B cell (primary cell): ENCODE measurements at regions of chr6 and their contacts with region 1.

Region 1: GRCh38 chr6:10886691-10887535 is at the start of gene SYCP2L:
- DNase-seq: peak; percentile 76
- ATAC-seq: no peak
- H3K4me3 ChIP-seq: peak within 1 kb of the TSS in 4 of 5 experiments; percentile 25 to 53 (median 38)
- H3K4me3 Mint-ChIP-seq: peak within 1 kb of the TSS; percentile 79
- H3K27ac ChIP-seq: no peak within 1 kb of the TSS
- H3K27ac Mint-ChIP-seq: peak within 1 kb of the TSS; percentile 16
- H3K4me1 ChIP-seq: peaks cover 44 to 46% of the 10 kb centered on the region in 2 donors
- H3K4me1 Mint-ChIP-seq: peaks cover 35% of the 10 kb centered on the region
- H3K27me3 ChIP-seq: peaks cover 0 to 58% (median 53%) of the 10 kb centered on the region in 4 experiments
- H3K27me3 Mint-ChIP-seq: peaks cover 53% of the 10 kb centered on the region
- CTCF ChIP-seq: peak; percentile 26
- total RNA-seq, gene SYCP2L: not detected in 2 replicates

Region 2: DNA sequence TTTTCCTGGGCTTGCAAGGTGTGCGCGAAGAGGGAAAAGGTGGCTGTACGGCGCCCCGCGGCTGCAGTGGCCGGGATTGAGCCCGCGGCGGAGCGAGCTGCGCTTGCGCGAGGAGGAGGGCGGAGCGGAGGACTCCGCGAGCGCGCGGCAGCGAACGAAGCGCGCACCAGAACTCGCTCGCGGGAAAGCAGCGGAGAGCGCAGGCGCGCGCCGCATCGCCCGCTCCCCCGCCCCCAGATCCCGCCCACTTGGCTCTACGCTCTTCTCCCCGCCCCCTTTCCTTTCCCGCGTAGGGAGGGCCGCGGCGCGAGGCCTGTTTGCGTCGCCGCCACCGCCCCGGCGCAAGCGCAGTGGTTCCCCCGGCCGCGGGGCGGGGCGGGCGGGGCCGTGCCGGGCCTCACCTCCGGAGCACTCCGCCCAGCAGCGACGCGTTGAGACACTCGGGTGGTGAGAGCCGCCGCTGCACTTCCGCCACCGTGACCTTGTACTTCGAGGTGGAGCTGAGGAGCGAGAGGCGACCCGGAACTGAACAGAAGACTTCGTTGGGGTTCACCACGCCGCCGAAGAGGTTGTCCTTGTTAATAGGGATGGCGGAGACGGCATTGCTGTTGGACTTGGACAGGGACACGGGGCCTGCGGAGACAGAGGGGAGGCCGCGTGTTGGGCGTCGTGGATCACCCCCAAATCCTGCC is 482.7 kb before region 1 on chr6:
- CTCF ChIA-PET with region 1: no interaction called
- POLR2A ChIA-PET with region 1: no interaction called
- intact Hi-C with region 1: loop called (anchors 5 kb)
- DNase-seq: peak; percentile 91
- ATAC-seq: peak; percentile 87
- H3K4me3 ChIP-seq: peak overlapping the region; percentile 43 to 66 (median 59)
- H3K4me3 Mint-ChIP-seq: peak overlapping the region; percentile 81
- H3K27ac ChIP-seq: peak overlapping the region; percentile 32 to 37
- H3K27ac Mint-ChIP-seq: peak overlapping the region; percentile 56
- H3K4me1 ChIP-seq: peaks cover 14 to 15% of the 10 kb centered on the region in 2 donors
- H3K4me1 Mint-ChIP-seq: peaks cover 13% of the 10 kb centered on the region
- H3K27me3 ChIP-seq: peaks cover 0 to 64% (median 62%) of the 10 kb centered on the region in 4 experiments
- H3K27me3 Mint-ChIP-seq: peaks cover 77% of the 10 kb centered on the region
- CTCF ChIP-seq: no peak

Region 3: DNA sequence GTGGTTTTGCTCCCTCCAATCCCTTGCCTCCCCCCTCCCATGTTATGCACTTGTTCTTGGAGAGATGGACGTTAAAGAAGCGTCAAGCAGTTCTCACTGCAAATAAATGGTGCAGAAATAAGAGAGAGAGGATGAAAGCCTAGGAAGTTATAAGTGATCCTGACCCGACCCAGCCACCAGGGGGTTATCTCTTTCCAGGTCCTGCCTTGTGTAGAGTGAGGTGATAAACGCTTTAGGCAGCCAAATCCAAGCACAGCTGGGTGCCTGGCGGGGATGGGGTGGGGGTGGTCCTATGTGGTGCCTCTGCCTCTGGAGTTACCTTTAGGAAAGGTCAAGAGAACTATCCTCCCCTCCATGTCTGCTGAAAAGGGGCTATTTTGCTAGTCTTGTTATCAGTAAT is 462.9 kb before region 1 on chr6:
- CTCF ChIA-PET with region 1: no interaction called
- POLR2A ChIA-PET with region 1: no interaction called
- intact Hi-C with region 1: loop called (anchors 5 kb)
- DNase-seq: no peak
- ATAC-seq: no peak
- H3K4me3 ChIP-seq: no peak overlapping the region
- H3K4me3 Mint-ChIP-seq: no peak overlapping the region
- H3K27ac ChIP-seq: no peak overlapping the region
- H3K27ac Mint-ChIP-seq: peak overlapping the region; percentile 26
- H3K4me1 ChIP-seq: peaks cover 22 to 53% of the 10 kb centered on the region in 2 donors
- H3K4me1 Mint-ChIP-seq: peaks cover 27% of the 10 kb centered on the region
- H3K27me3 ChIP-seq: peaks cover 2 to 88% (median 81%) of the 10 kb centered on the region in 4 experiments
- H3K27me3 Mint-ChIP-seq: peaks cover 73% of the 10 kb centered on the region
- CTCF ChIP-seq: no peak

Region 4: DNA sequence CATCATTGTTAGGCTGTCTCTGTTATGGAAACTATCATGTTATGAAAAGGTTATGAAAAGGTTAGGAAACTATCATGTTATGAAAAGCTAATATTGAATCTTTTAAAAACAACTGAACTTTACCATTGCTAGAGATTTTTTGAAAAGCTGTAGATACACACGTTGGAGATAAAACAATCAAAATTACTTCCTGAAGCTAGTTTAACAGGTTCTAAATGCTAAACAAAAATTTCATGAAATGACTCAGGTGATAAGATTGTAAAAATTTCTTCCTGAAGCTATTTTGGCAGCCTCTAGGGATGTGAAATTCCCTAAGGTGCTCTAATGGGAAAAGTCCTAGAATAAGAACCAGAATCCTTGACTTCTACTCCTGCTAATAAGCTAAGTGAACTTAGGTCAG is 13.6 kb before region 1 on chr6:
- CTCF ChIA-PET with region 1: no interaction called
- POLR2A ChIA-PET with region 1: no interaction called
- intact Hi-C with region 1: no loop called
- DNase-seq: no peak
- ATAC-seq: no peak
- H3K4me3 ChIP-seq: no peak overlapping the region
- H3K4me3 Mint-ChIP-seq: no peak overlapping the region
- H3K27ac ChIP-seq: no peak overlapping the region
- H3K27ac Mint-ChIP-seq: no peak overlapping the region
- H3K4me1 ChIP-seq: no peaks in the 10 kb centered on the region
- H3K4me1 Mint-ChIP-seq: no peaks in the 10 kb centered on the region
- H3K27me3 ChIP-seq: peaks cover 0 to 8% (median 0%) of the 10 kb centered on the region in 4 experiments
- H3K27me3 Mint-ChIP-seq: peaks cover 36% of the 10 kb centered on the region
- CTCF ChIP-seq: no peak

Region 5: GRCh38 chr6:10901770-10902169 is 14.9 kb after region 1 on chr6:
- CTCF ChIA-PET with region 1: interaction called, 3 read pairs
- POLR2A ChIA-PET with region 1: no interaction called
- intact Hi-C with region 1: loop called (anchors 1 kb)
- DNase-seq: peak; percentile 80
- ATAC-seq: peak; percentile 97
- H3K4me3 ChIP-seq: peak overlapping the region in 4 of 5 experiments; percentile 1 to 52 (median 38)
- H3K4me3 Mint-ChIP-seq: peak overlapping the region; percentile 86
- H3K27ac ChIP-seq: peak overlapping the region; percentile 31 to 70
- H3K27ac Mint-ChIP-seq: peak overlapping the region; percentile 93
- H3K4me1 ChIP-seq: peaks cover 14% of the 10 kb centered on the region in 2 donors
- H3K4me1 Mint-ChIP-seq: peaks cover 17% of the 10 kb centered on the region
- H3K27me3 ChIP-seq: no peaks in the 10 kb centered on the region
- H3K27me3 Mint-ChIP-seq: no peaks in the 10 kb centered on the region
- CTCF ChIP-seq: no peak

Region 6: DNA sequence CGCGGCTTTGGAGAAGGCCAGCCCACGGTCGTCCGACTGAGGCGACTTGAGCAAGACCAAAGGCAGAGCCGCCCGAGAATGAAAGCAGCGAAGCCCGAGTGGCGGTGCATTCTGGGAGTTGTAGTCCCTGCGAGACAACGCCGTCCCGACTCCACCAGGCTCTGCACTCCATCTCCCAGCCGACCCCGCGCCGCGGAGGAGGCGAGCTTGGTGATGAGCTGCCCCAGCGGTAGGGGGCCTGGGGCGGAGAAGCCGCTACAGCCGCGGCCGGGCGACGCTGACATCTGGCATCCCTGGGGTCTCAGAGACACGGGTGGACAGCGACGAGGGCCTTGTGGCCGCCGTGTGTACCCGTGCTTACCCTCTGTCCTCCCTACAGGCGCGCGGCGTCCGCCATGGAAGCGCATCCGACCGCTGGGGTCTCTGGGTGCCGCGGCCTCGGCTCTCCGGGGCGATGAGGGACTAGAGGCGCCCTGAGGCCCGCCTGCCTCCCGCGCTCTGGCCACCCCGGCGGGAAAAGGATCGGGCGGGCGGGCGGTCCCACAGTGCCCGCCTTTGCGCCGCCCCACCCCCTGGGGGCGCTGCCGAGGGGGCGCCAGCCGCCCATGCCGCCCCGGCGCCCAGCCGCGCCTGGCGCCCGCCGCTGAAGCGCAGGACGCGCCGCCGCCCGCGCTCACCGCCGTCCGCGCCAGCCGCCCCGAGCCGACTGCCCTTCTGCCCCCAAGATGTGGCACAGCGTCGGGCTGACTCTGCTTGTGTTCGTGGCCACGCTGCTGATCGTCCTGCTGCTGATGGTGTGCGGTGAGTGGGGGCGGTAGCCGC is 206.9 kb after region 1 on chr6 and contains the start of gene SMIM13:
- CTCF ChIA-PET with region 1: no interaction called
- POLR2A ChIA-PET with region 1: no interaction called
- intact Hi-C with region 1: loop called (anchors 5 kb)
- DNase-seq: peak; percentile 96
- ATAC-seq: peak; percentile 90
- H3K4me3 ChIP-seq: peak within 1 kb of the TSS; percentile 65 to 95 (median 89)
- H3K4me3 Mint-ChIP-seq: peak within 1 kb of the TSS; percentile 97
- H3K27ac ChIP-seq: peak within 1 kb of the TSS; percentile 91 to 93
- H3K27ac Mint-ChIP-seq: peak within 1 kb of the TSS; percentile 97
- H3K4me1 ChIP-seq: peaks cover 12% of the 10 kb centered on the region in 2 donors
- H3K4me1 Mint-ChIP-seq: peaks cover 22% of the 10 kb centered on the region
- H3K27me3 ChIP-seq: no peaks in the 10 kb centered on the region
- H3K27me3 Mint-ChIP-seq: peaks cover 3% of the 10 kb centered on the region
- CTCF ChIP-seq: peak; percentile 74
- total RNA-seq, gene SMIM13: 5.5 and 7.0 TPM in 2 replicates